Heart right ventricle (tissue), 16 donors: ENCODE measurements at regions of chr1 and their contacts with region 1.

Region 1: GRCh38 chr1:155308493-155309422 is at the start of gene FDPS:
- DNase-seq: peak; percentile 98 to 99
- ATAC-seq: peak; percentile 99 to 100 (median 99)
- H3K4me3 ChIP-seq: peak within 1 kb of the TSS; percentile 53 to 99 (median 81)
- H3K27ac ChIP-seq: peak within 1 kb of the TSS; percentile 74 to 97 (median 92)
- H3K4me1 ChIP-seq: peaks cover 0 to 40% (median 36%) of the 10 kb centered on the region in 9 donors
- H3K27me3 ChIP-seq: no peaks in the 10 kb centered on the region
- CTCF ChIP-seq: peak in 3 of 9 donors; percentile 3 to 26 (median 19)
- total RNA-seq, gene FDPS: 63.1 to 108 (median 76.9) TPM

Region 2: DNA sequence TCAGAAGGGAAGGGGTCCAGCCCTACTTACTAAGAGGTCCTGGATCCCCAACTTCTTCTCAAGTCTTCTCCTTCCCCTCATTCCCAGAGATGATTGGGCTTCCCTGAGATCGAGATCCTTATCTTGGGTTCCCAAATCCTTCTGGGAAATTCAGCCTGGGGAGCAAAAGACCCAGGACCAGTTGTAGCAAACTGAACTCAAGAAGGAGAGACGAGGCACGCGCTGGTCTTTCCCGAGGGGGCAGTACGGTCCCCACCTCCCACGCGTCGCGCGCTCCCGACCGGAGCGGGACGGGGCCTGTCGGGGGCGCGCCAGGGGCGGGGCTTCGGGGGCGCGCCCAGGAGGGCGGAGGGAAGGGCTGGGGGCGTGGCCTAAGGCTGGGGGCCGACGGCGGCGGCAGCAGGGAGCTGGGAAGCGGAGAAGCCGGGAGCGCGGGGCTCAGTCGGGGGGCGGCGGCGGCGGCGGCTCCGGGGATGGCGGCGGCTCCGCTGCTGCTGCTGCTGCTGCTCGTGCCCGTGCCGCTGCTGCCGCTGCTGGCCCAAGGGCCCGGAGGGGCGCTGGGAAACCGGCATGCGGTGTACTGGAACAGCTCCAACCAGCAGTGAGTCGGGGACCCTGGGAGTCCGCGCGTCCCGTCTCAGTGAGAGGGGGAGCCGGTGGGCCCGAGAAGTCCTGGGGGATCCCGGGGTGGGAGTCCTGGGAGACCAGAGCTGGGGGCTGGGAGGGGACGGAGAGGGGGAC is 230.1 kb before region 1 on chr1 and contains the start of gene EFNA3:
- intact Hi-C with region 1: no loop called
- DNase-seq: peak; percentile 74 to 83
- ATAC-seq: peak; percentile 63 to 90 (median 82)
- H3K4me3 ChIP-seq: peak within 1 kb of the TSS in 9 of 10 donors; percentile 37 to 58 (median 49)
- H3K27ac ChIP-seq: no peak within 1 kb of the TSS
- H3K4me1 ChIP-seq: peaks cover 25 to 52% (median 43%) of the 10 kb centered on the region in 9 donors
- H3K27me3 ChIP-seq: peaks cover 37 to 58% (median 44%) of the 10 kb centered on the region in 7 donors
- CTCF ChIP-seq: peak in 1 of 9 donors; percentile 10
- total RNA-seq, gene EFNA3: 0.23 to 1.9 (median 0.46) TPM in 9 of 10 donors, not detected in the other

Region 3: DNA sequence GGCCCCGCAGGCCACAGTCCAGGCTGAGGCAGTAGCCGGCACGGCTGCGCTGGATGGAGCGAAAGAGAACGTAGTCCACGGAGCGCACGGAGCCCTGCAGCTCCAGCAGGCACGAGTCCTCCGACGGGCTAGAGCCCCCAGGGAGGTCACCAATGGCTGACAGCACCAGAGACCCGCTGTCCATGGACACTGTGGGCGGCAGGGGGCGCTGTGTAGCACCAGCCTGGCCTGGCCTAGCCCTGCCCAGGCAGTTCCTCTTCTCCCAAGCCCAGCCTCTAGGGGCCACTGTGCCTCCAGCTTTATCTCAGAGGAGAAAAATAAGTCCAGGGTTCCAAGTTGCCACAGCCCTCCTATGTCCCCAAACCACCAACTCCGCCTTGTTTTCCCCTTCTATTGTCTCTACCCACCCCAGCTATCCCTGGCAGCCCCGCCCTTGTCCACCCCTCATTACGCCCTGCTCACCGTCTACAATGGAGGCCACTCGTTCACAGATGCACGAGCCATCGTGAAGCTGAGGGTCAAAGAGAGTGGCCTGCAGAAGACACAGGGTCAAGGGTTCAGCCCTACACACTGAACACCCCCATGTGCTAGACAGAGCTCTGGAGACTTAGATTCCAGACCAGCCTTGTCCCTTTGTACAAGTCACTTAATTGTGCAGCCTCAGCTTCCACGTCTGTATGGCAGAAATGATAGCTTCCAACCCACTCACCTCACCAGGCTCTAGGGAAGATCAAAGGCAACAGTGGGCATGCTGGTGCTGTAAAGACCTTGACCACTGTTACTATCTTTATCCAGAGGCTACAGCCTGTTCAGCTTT is 57.9 kb before region 1 on chr1:
- intact Hi-C with region 1: loop called in 1 of 10 experiments (anchors 1 kb)
- DNase-seq: peak; percentile 93 to 95
- ATAC-seq: peak; percentile 80 to 89 (median 84)
- H3K4me3 ChIP-seq: peak overlapping the region in 7 of 10 donors; percentile 12 to 57 (median 37)
- H3K27ac ChIP-seq: peak overlapping the region in 8 of 10 donors; percentile 15 to 90 (median 38)
- H3K4me1 ChIP-seq: peaks cover 12 to 36% (median 29%) of the 10 kb centered on the region in 9 donors
- H3K27me3 ChIP-seq: no peaks in the 10 kb centered on the region
- CTCF ChIP-seq: peak in 8 of 9 donors; percentile 99 to 100 (median 100)

Region 4: GRCh38 chr1:155277070-155277895 is 31.5 kb before region 1 on chr1 and contains the start of gene HCN3:
- intact Hi-C with region 1: loop called in 5 of 10 experiments (anchors 1 to 5 kb)
- DNase-seq: peak; percentile 98
- ATAC-seq: peak; percentile 89 to 94 (median 90)
- H3K4me3 ChIP-seq: peak within 1 kb of the TSS; percentile 51 to 98 (median 70)
- H3K27ac ChIP-seq: peak within 1 kb of the TSS in 9 of 10 donors; percentile 49 to 72 (median 61)
- H3K4me1 ChIP-seq: peaks cover 6 to 34% (median 30%) of the 10 kb centered on the region in 9 donors
- H3K27me3 ChIP-seq: no peaks in the 10 kb centered on the region
- CTCF ChIP-seq: peak; percentile 64 to 97 (median 84)
- total RNA-seq, gene HCN3: 0.68 to 1.7 (median 1.0) TPM

Region 5: DNA sequence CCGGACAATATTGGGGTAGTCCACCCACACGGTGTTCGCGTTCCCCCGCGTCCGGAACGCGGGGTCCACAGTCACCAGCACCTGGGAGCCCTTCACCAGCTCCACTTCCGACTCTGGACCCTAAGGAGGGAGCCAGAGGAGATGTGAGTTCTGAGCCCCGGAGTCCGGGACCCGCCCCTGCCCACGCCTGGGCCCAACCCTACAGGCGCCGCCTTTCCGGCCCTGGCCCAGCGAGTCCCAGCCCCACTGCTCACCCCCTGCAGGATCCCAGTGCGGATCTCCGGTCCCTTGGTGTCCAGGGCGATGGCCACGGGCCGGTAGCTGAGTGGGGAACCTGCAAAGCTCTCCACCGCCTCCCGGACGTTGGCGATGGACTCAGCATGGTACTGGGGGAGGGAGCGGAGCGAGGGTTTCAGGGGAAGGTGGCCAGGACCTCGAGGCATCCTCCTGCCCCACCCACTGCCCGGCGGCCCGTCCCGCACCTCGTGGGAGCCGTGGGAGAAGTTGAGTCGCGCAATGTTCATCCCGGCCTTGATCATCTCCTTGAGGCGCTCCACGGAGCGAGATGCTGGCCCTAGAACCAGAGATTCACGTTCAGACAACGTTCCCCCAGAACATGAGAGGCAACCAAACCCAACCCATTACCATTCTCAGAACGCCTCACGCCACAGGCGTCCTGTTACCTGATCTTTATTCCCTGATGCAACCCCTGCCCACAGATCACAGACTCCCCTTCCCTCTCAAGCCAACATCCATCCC is 13.4 kb before region 1 on chr1:
- intact Hi-C with region 1: no loop called
- DNase-seq: no peak
- ATAC-seq: peak in 5 of 8 donors; percentile 13 to 55 (median 41)
- H3K4me3 ChIP-seq: peak overlapping the region in 7 of 10 donors; percentile 11 to 34 (median 23)
- H3K27ac ChIP-seq: no peak overlapping the region
- H3K4me1 ChIP-seq: peaks cover 2 to 14% (median 6%) of the 10 kb centered on the region in 9 donors
- H3K27me3 ChIP-seq: peaks cover 9 to 50% (median 32%) of the 10 kb centered on the region in 7 donors
- CTCF ChIP-seq: no peak

Region 6: DNA sequence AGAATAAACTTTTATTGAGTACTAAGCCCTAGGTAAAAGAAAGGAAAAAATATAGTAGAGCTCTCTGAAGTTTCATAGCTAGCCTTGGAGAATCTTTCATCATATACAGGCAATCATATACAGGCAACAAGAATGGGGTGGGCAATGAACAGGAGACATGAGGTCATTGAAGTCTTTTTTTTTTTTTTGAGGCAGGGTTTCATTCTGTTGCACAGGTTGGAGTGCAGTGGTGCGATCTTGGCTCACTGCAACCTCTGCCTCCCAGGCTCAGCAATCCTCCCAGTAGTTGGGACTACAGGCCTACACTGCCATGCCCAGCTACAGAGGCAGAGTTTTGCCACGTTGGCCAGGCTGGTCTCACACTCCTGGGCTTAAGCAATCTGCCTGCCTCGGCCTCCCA is 34.1 kb after region 1 on chr1:
- intact Hi-C with region 1: no loop called
- DNase-seq: no peak
- ATAC-seq: no peak
- H3K4me3 ChIP-seq: no peak overlapping the region
- H3K27ac ChIP-seq: no peak overlapping the region
- H3K4me1 ChIP-seq: no peaks in the 10 kb centered on the region
- H3K27me3 ChIP-seq: no peaks in the 10 kb centered on the region
- CTCF ChIP-seq: no peak